Activated CD4-positive, alpha-beta T cell treated with anti-CD3 and anti-CD28 coated beads for 36 hours (primary cell): ENCODE measurements at regions of chr5 and their contacts with region 1.

Region 1: GRCh38 chr5:140401362-140402257 is at the start of gene ANKHD1:
- DNase-seq: peak; percentile 98
- ATAC-seq: peak; percentile 83
- H3K4me3 Mint-ChIP-seq: no peak within 1 kb of the TSS
- H3K27ac Mint-ChIP-seq: peak within 1 kb of the TSS; percentile 87
- H3K4me1 Mint-ChIP-seq: peaks cover 24% of the 10 kb centered on the region
- H3K27me3 Mint-ChIP-seq: no peaks in the 10 kb centered on the region
- total RNA-seq, gene ANKHD1: 77.1 to 93.5 TPM

Region 2: GRCh38 chr5:140005145-140005591 is 396.4 kb before region 1 on chr5:
- CTCF ChIA-PET with region 1: no interaction called
- POLR2A ChIA-PET with region 1: no interaction called
- intact Hi-C with region 1: no loop called
- DNase-seq: no peak
- ATAC-seq: no peak
- H3K4me3 Mint-ChIP-seq: no peak overlapping the region
- H3K27ac Mint-ChIP-seq: no peak overlapping the region
- H3K4me1 Mint-ChIP-seq: no peaks in the 10 kb centered on the region
- H3K27me3 Mint-ChIP-seq: peaks cover 33% of the 10 kb centered on the region

Region 3: GRCh38 chr5:140174465-140175366 is 226.9 kb before region 1 on chr5 and contains the start of gene CYSTM1:
- CTCF ChIA-PET with region 1: no interaction called
- POLR2A ChIA-PET with region 1: no interaction called
- intact Hi-C with region 1: loop called in 1 of 2 experiments (anchors 1 kb)
- DNase-seq: peak; percentile 98
- ATAC-seq: peak; percentile 93
- H3K4me3 Mint-ChIP-seq: peak within 1 kb of the TSS; percentile 91
- H3K27ac Mint-ChIP-seq: peak within 1 kb of the TSS; percentile 82
- H3K4me1 Mint-ChIP-seq: peaks cover 15% of the 10 kb centered on the region
- H3K27me3 Mint-ChIP-seq: no peaks in the 10 kb centered on the region
- total RNA-seq, gene CYSTM1: 15.2 to 18.7 TPM

Region 4: DNA sequence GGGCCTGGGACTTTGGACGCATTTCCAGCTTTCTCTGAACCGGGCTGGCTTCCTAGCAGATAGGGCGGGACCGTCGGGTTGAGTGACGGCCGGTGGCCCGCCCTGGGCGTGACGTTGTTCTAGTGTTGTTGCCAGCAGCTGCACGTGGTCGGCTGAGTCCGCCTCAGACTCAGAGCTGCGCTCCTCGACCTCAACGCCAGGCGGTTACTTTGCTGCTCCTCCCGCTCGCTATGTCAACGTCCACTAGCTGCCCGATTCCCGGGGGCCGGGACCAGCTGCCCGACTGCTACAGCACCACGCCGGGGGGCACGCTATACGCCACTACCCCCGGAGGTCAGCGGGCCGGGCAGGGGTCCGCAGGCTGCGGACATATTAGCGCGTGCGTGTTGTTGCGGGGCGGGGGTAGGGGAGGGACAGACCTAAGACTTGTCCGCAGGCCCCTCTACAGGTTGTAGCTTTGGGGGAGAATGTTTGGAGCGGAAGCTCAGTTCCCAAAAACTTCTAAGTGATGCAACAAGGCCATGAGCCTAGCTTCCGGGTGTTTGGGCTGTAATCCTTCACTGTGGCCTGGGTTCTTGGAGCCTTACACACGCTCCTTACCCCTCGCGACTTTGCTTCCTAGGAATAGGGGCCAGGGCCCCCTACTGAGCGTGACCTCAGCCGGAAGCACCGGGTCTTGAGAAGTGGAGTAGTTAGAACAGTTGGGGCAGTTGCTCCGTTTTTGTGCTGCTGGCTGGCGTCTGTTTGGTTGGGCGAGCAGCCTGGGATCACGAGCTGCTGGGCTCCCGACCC is 146.1 kb after region 1 on chr5 and contains the start of gene EIF4EBP3:
- CTCF ChIA-PET with region 1: interaction called, 4 read pairs
- POLR2A ChIA-PET with region 1: interaction called, 3 read pairs
- intact Hi-C with region 1: loop called in 1 of 2 experiments (anchors 1 kb)
- DNase-seq: peak; percentile 93
- ATAC-seq: peak; percentile 99
- H3K4me3 Mint-ChIP-seq: peak within 1 kb of the TSS; percentile 82
- H3K27ac Mint-ChIP-seq: peak within 1 kb of the TSS; percentile 93
- H3K4me1 Mint-ChIP-seq: peaks cover 38% of the 10 kb centered on the region
- H3K27me3 Mint-ChIP-seq: no peaks in the 10 kb centered on the region
- total RNA-seq, gene EIF4EBP3: 15.8 to 17.3 TPM

Region 5: GRCh38 chr5:140632150-140633020 is 230.8 kb after region 1 on chr5:
- CTCF ChIA-PET with region 1: no interaction called
- POLR2A ChIA-PET with region 1: interaction called, 3 read pairs
- intact Hi-C with region 1: loop called in 1 of 2 experiments (anchors 1 kb)
- DNase-seq: peak; percentile 69
- ATAC-seq: peak; percentile 67
- H3K4me3 Mint-ChIP-seq: peak overlapping the region; percentile 74
- H3K27ac Mint-ChIP-seq: peak overlapping the region; percentile 73
- H3K4me1 Mint-ChIP-seq: peaks cover 31% of the 10 kb centered on the region
- H3K27me3 Mint-ChIP-seq: peaks cover 14% of the 10 kb centered on the region

Region 6: GRCh38 chr5:140664359-140665119 is 262.9 kb after region 1 on chr5 and contains the start of gene WDR55:
- CTCF ChIA-PET with region 1: no interaction called
- POLR2A ChIA-PET with region 1: interaction called, 3 read pairs
- intact Hi-C with region 1: loop called (anchors 1 kb)
- DNase-seq: peak; percentile 97
- ATAC-seq: peak; percentile 96
- H3K4me3 Mint-ChIP-seq: peak within 1 kb of the TSS; percentile 98
- H3K27ac Mint-ChIP-seq: peak within 1 kb of the TSS; percentile 96
- H3K4me1 Mint-ChIP-seq: peaks cover 28% of the 10 kb centered on the region
- H3K27me3 Mint-ChIP-seq: no peaks in the 10 kb centered on the region
- total RNA-seq, gene WDR55: 25.9 to 31.7 TPM

Region 7: DNA sequence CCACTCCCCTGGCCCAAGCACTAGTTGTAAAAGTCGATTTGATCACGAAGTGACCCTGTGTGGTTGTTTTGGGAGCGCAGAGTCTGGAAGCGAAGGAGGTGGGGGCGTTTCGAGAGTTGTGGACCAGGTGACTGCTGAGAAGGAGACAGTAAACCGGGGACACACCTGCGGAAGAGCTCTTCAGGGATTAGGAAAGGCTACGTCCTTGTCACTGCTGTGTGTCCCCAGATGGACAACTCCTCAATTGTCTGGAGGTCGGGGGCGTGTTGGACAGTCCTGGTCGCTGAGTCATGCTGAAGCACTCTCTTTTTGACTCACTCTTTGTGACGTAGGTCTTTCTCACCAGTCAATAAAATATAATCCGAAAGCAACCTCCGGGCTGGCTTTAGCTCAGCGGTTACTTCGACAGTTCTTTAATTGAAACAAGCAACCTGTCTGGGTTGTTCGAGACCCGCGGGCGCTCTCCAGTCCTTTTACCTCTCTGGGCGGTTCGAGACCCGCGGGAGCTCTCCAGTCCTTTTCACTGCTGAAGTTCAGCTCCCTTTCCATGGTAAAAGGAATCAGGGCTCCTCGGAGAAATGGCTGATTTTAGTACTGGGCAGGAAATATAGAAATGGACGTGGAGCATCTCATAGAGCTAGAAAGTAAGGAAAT is 309.4 kb after region 1 on chr5:
- CTCF ChIA-PET with region 1: interaction called, 4 read pairs
- POLR2A ChIA-PET with region 1: interaction called, 7 read pairs
- intact Hi-C with region 1: loop called in 1 of 2 experiments (anchors 1 kb)
- DNase-seq: peak; percentile 93
- ATAC-seq: peak; percentile 95
- H3K4me3 Mint-ChIP-seq: peak overlapping the region; percentile 86
- H3K27ac Mint-ChIP-seq: peak overlapping the region; percentile 97
- H3K4me1 Mint-ChIP-seq: peaks cover 18% of the 10 kb centered on the region
- H3K27me3 Mint-ChIP-seq: no peaks in the 10 kb centered on the region